Breast epithelium (tissue), 4 donors: ENCODE measurements at regions of chr7 and their contacts with region 1.

Region 1: GRCh38 chr7:50206453-50207250 is 97.9 kb upstream of the IKZF1 start:
- DNase-seq: no peak
- H3K4me3 ChIP-seq: no peak overlapping the region
- H3K27ac ChIP-seq: no peak overlapping the region
- H3K4me1 ChIP-seq: no peaks in the 10 kb centered on the region
- H3K27me3 ChIP-seq: no peaks in the 10 kb centered on the region
- CTCF ChIP-seq: no peak
- POLR2A ChIP-seq: no peak

Region 2: DNA sequence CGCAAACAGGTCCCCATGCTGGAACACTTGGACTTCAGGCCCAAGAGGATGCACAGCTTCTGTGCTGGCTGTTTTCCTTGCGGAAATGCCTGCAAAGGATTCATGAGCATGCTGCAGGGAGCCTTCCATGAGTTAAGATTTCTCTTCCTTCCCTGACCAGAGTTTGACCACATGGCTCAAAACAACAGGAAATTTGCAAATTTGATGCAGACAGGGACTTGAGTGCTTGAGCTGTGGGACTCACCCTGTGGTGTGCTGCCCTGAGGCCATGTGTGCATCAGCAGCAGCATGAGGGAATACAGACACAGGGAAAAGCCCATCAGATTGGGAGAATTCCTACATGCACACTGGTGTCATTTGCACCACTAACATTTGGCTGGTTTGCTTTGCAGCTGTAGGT is 1086.9 kb before region 1 on chr7:
- intact Hi-C with region 1: no loop called
- DNase-seq: no peak
- H3K4me3 ChIP-seq: no peak overlapping the region
- H3K27ac ChIP-seq: no peak overlapping the region
- H3K4me1 ChIP-seq: no peaks in the 10 kb centered on the region
- H3K27me3 ChIP-seq: no peaks in the 10 kb centered on the region
- CTCF ChIP-seq: no peak
- POLR2A ChIP-seq: no peak

Region 3: DNA sequence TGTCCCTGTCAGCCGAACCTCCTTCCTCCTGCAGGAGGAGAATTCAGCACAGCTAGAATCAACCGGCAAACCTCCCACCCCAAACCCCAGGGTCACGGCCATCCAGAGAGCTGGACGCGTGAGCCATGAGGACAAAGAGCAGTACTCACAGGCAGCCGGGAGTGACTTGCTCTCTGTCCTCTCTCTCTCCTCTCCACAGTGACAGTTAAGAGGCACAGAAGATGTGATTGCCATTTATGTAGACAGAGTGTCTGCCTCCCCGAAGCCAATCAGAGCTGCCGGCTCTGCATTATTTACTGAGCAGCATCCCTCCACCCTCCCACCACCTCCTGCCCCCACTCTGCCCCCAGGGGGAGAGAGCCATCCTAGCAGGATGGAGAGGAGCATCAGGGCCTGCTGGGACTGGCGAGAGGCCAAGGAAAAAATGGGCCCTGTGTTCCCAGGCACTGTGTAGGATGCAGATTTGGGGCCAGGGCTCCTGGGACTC is 354.3 kb after region 1 on chr7:
- intact Hi-C with region 1: loop called (anchors 10 kb)
- DNase-seq: no peak
- H3K4me3 ChIP-seq: no peak overlapping the region
- H3K27ac ChIP-seq: no peak overlapping the region
- H3K4me1 ChIP-seq: no peaks in the 10 kb centered on the region
- H3K27me3 ChIP-seq: peaks cover 0 to 6% of the 10 kb centered on the region in 2 donors
- CTCF ChIP-seq: no peak
- POLR2A ChIP-seq: no peak